Naive thymus-derived CD4-positive, alpha-beta T cell (primary cell): ENCODE measurements at regions of chr10 and their contacts with region 1.

Region 1: DNA sequence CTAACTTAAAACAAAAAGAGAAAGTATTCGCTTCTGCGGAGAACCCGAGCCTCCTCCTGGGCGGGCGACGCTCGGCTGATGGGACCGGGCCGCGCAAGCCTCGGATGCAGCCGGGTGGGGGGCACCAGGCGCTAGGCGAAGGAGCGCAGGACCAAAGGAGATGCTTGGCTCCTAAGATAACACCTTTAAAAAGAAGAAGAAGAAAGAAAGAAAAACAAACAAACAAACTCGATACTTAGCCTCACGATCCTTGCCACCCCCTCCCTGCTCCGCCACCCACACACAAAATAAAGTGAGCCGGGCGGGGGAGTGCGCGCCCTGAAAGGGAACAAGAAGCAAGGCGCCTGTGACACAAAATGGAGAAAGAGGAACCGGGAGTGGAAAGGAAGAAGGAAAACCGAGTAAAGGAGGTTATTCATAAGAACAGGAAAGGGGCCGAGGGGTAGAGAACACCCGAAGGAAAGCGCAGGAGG is 34.0 kb upstream of the EBLN1 start:
- DNase-seq: peak in 8 of 9 donors; percentile 48 to 76 (median 73)
- ATAC-seq: peak; percentile 73
- H3K4me3 ChIP-seq: peak overlapping the region; percentile 82
- H3K4me3 Mint-ChIP-seq: peak overlapping the region; percentile 90 to 100 (median 94)
- H3K27ac ChIP-seq: peak overlapping the region; percentile 87
- H3K27ac Mint-ChIP-seq: peak overlapping the region; percentile 95 to 100 (median 99)
- H3K4me1 ChIP-seq: peaks cover 0 to 4% of the 10 kb centered on the region in 2 donors
- H3K4me1 Mint-ChIP-seq: peaks cover 8 to 40% (median 38%) of the 10 kb centered on the region in 7 donors
- H3K27me3 ChIP-seq: no peaks in the 10 kb centered on the region
- H3K27me3 Mint-ChIP-seq: peaks cover 8 to 31% (median 10%) of the 10 kb centered on the region in 5 donors

Region 2: GRCh38 chr10:21525367-21526183 is 726.2 kb before region 1 on chr10 and contains the start of gene SKIDA1:
- CTCF ChIA-PET with region 1: no interaction called
- POLR2A ChIA-PET with region 1: interaction called, 3 read pairs
- intact Hi-C with region 1: loop called in 1 of 2 experiments (anchors 10 kb)
- DNase-seq: peak; percentile 31 to 72 (median 64)
- ATAC-seq: peak; percentile 73
- H3K4me3 ChIP-seq: peak within 1 kb of the TSS; percentile 79
- H3K4me3 Mint-ChIP-seq: peak within 1 kb of the TSS; percentile 85 to 99 (median 96)
- H3K27ac ChIP-seq: peak within 1 kb of the TSS; percentile 68
- H3K27ac Mint-ChIP-seq: peak within 1 kb of the TSS; percentile 87 to 98 (median 97)
- H3K4me1 ChIP-seq: peaks cover 4 to 17% of the 10 kb centered on the region in 2 donors
- H3K4me1 Mint-ChIP-seq: peaks cover 16 to 39% (median 38%) of the 10 kb centered on the region in 7 donors
- H3K27me3 ChIP-seq: peaks cover 4 to 6% of the 10 kb centered on the region in 2 donors
- H3K27me3 Mint-ChIP-seq: peaks cover 20 to 70% (median 38%) of the 10 kb centered on the region in 5 donors
- total RNA-seq, gene SKIDA1: 0.17 to 0.45 (median 0.28) TPM in 4 of 5 experiments, not detected in the other

Region 3: GRCh38 chr10:22003079-22003913 is 248.5 kb before region 1 on chr10 and contains the start of gene DNAJC1:
- CTCF ChIA-PET with region 1: no interaction called
- POLR2A ChIA-PET with region 1: interaction called, 6 read pairs
- intact Hi-C with region 1: loop called (anchors 1 kb)
- DNase-seq: peak; percentile 94 to 99 (median 97)
- ATAC-seq: peak; percentile 97
- H3K4me3 ChIP-seq: peak within 1 kb of the TSS; percentile 87
- H3K4me3 Mint-ChIP-seq: peak within 1 kb of the TSS; percentile 81 to 99 (median 94)
- H3K27ac ChIP-seq: peak within 1 kb of the TSS; percentile 82
- H3K27ac Mint-ChIP-seq: peak within 1 kb of the TSS; percentile 78 to 94 (median 92)
- H3K4me1 ChIP-seq: peaks cover 18 to 19% of the 10 kb centered on the region in 2 donors
- H3K4me1 Mint-ChIP-seq: peaks cover 7 to 42% (median 29%) of the 10 kb centered on the region in 7 donors
- H3K27me3 ChIP-seq: no peaks in the 10 kb centered on the region
- H3K27me3 Mint-ChIP-seq: peaks cover 0 to 15% (median 4%) of the 10 kb centered on the region in 5 donors
- total RNA-seq, gene DNAJC1: 11.0 to 23.9 (median 12.1) TPM

Region 4: GRCh38 chr10:22325272-22326144 is 73.7 kb after region 1 on chr10:
- CTCF ChIA-PET with region 1: no interaction called
- POLR2A ChIA-PET with region 1: interaction called, 22 read pairs
- intact Hi-C with region 1: no loop called
- DNase-seq: peak; percentile 64 to 85 (median 80)
- ATAC-seq: peak; percentile 59
- H3K4me3 ChIP-seq: peak overlapping the region; percentile 44
- H3K4me3 Mint-ChIP-seq: peak overlapping the region; percentile 80 to 94 (median 88)
- H3K27ac ChIP-seq: peak overlapping the region; percentile 72
- H3K27ac Mint-ChIP-seq: peak overlapping the region; percentile 73 to 95 (median 93)
- H3K4me1 ChIP-seq: peaks cover 6 to 17% of the 10 kb centered on the region in 2 donors
- H3K4me1 Mint-ChIP-seq: peaks cover 17 to 43% (median 38%) of the 10 kb centered on the region in 7 donors
- H3K27me3 ChIP-seq: peaks cover 0 to 5% of the 10 kb centered on the region in 2 donors
- H3K27me3 Mint-ChIP-seq: peaks cover 6 to 50% (median 36%) of the 10 kb centered on the region in 5 donors

Region 5: DNA sequence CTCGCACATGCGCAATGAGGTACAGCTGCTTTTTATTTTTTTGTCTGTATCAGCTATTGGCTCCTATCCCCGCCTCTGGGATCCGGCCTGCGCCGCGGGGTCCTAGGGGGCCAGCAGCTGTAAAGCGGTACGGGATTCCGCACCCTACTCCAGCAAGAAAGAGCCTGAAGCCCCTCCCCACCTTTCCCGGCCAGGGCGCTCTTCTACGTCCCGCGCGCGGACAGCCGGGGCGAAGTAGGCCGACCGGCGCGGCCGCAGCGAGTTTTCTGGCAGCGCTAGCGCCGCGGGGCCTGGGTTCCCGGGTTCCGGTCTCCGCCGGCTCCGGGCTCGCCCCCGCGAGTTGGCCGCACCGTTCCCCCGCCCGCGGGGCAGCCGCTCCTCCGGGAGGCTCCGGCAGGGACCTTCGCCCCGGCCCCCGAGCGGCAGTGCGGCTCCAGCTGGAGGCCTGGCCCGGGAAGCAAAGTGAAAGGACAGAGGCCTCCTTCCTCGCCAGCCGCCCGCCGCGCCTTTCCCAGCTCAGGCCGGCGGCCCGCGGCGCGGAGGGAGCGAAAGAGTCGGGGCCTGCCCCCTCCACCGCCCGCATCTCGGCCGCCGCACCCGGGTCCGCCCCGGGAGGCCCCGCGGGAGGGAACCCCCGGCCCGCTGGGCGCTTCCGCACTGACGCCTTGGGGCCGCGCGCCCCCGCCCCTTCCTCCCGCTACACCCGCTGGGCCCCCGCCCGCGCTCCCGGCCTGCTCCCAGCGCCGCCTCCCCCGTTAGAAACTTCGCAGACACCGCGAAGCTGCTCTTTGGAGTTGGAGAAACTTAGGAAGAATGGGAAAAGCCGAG is 88.8 kb after region 1 on chr10:
- CTCF ChIA-PET with region 1: no interaction called
- POLR2A ChIA-PET with region 1: interaction called, 11 read pairs
- intact Hi-C with region 1: loop called in 1 of 2 experiments (anchors 1 kb)
- DNase-seq: peak in 8 of 9 donors; percentile 41 to 80 (median 58)
- ATAC-seq: peak; percentile 59
- H3K4me3 ChIP-seq: peak overlapping the region; percentile 41
- H3K4me3 Mint-ChIP-seq: peak overlapping the region; percentile 80 to 89 (median 86)
- H3K27ac ChIP-seq: peak overlapping the region; percentile 20
- H3K27ac Mint-ChIP-seq: peak overlapping the region; percentile 56 to 93 (median 89)
- H3K4me1 ChIP-seq: peaks cover 24 to 26% of the 10 kb centered on the region in 2 donors
- H3K4me1 Mint-ChIP-seq: peaks cover 0 to 54% (median 18%) of the 10 kb centered on the region in 7 donors
- H3K27me3 ChIP-seq: peaks cover 51 to 91% of the 10 kb centered on the region in 2 donors
- H3K27me3 Mint-ChIP-seq: peaks cover 59 to 79% (median 74%) of the 10 kb centered on the region in 5 donors

Region 6: DNA sequence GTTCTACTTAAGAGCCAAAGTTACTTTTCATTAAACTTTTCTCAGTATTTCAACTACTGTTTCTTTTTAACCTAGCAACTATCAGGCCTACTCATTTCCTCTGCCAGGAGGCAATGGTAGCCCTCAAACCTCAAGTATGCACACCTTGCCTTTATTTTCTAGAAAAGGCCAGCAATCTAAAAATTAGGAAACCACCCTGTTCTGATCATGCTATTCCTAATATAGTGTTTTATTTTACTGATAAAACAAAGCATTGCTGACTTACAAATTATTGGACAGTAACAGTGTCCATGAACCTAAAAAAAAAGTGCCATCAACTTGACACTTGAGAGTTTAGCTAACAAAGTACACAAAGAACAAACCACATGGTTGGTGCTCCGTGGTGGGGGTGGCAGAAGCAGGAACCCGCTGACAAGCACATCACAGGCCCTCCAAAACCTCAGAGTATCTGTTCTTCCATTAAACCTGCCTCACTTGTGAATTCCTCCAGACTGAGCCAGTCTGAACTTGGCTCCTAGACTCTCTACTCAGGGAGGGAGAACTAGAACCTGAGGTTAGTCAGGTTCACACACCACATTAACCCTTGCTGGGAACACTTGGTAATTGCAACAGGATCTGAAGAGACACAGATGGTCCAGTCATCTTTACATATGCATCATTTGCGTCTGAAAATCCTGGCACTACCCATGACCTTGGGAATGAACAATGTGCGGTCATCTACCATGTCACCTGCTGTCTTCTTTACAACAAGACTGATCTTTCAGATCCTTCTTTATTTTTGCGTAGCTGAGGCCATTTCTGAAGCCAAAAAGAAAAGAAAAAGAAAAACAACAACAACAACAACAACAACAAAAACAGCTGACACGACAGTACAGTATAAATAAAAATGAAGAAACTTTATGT is 430.7 kb after region 1 on chr10:
- CTCF ChIA-PET with region 1: no interaction called
- POLR2A ChIA-PET with region 1: interaction called, 4 read pairs
- intact Hi-C with region 1: loop called in 1 of 2 experiments (anchors 5 kb)
- DNase-seq: peak in 8 of 9 donors; percentile 43 to 81 (median 75)
- ATAC-seq: peak; percentile 79
- H3K4me3 ChIP-seq: peak overlapping the region; percentile 36
- H3K4me3 Mint-ChIP-seq: peak overlapping the region; percentile 67 to 94 (median 80)
- H3K27ac ChIP-seq: peak overlapping the region; percentile 73
- H3K27ac Mint-ChIP-seq: peak overlapping the region; percentile 90 to 100 (median 95)
- H3K4me1 ChIP-seq: peaks cover 86 to 94% of the 10 kb centered on the region in 2 donors
- H3K4me1 Mint-ChIP-seq: peaks cover 64 to 99% (median 91%) of the 10 kb centered on the region in 7 donors
- H3K27me3 ChIP-seq: no peaks in the 10 kb centered on the region
- H3K27me3 Mint-ChIP-seq: no peaks in the 10 kb centered on the region